BJ (cell line): ENCODE measurements at regions of chr4 and their contacts with region 1.

Region 1: GRCh38 chr4:53015681-53016080 is 153.6 kb downstream of the RASL11B start:
- DNase-seq: no peak
- H3K4me3 ChIP-seq: no peak overlapping the region
- H3K27me3 ChIP-seq: no peaks in the 10 kb centered on the region
- CTCF ChIP-seq: peak; percentile 81

Region 2: DNA sequence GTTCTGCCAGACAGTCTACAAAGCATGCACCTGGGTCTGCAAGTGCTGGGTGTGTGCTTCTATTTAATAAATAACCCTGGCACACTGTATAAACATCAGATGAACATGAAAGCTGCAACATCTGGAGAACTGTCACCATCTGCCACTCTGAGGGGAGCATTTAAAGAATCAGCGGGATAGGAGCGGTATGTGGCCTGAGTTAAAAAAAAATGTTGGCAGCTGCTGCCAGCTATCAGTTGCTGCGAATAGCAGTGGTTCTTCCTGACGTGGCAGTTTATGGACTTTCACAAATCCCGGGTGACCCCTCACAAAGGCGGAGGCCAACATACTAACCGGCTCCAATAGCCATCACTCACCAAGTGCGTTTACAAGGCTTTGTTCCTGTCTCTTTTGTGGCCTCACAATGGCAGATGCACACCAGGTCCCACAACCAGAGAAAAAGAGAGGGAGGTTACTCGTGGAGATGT is 58.4 kb before region 1 on chr4:
- CTCF ChIA-PET with region 1: no interaction called
- POLR2A ChIA-PET with region 1: no interaction called
- DNase-seq: no peak
- H3K4me3 ChIP-seq: no peak overlapping the region
- H3K27me3 ChIP-seq: no peaks in the 10 kb centered on the region
- CTCF ChIP-seq: no peak

Region 3: GRCh38 chr4:53196882-53197771 is 181.4 kb after region 1 on chr4:
- CTCF ChIA-PET with region 1: interaction called, 17 read pairs
- POLR2A ChIA-PET with region 1: no interaction called
- DNase-seq: no peak
- H3K4me3 ChIP-seq: peak overlapping the region; percentile 14; the same call in 1 of the 2 replicates
- H3K27me3 ChIP-seq: no peaks in the 10 kb centered on the region
- CTCF ChIP-seq: peak; percentile 71